B cell (primary cell): ENCODE measurements at regions of chr3 and their contacts with region 1.

Region 1: DNA sequence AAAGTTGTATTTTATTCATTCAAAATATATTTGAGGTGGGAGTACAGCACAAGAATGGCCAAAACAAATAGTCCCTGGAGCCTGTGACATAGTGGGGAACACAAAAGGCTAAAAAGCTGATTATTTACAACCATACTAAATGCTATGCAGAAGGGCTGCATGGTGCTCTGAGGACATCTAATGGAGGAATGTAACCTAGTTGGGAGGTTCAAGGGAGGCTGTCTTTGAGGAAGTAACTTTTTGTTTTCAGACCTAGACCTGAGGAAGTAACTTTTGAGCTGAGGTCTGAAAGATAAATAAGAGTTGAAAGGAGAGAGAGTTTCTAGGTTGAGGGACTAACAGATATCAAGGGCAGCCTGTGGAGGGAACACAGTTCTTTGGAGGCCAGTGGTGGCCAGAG is 34.8 kb upstream of the RASA2 start:
- DNase-seq: peak; percentile 79
- ATAC-seq: peak; percentile 85
- H3K4me3 ChIP-seq: no peak overlapping the region
- H3K4me3 Mint-ChIP-seq: no peak overlapping the region
- H3K27ac ChIP-seq: peak overlapping the region; percentile 55 to 77
- H3K27ac Mint-ChIP-seq: no peak overlapping the region
- H3K4me1 ChIP-seq: peaks cover 12 to 16% of the 10 kb centered on the region in 2 donors
- H3K4me1 Mint-ChIP-seq: peaks cover 7% of the 10 kb centered on the region
- H3K27me3 ChIP-seq: no peaks in the 10 kb centered on the region
- H3K27me3 Mint-ChIP-seq: no peaks in the 10 kb centered on the region
- CTCF ChIP-seq: peak; percentile 73

Region 2: DNA sequence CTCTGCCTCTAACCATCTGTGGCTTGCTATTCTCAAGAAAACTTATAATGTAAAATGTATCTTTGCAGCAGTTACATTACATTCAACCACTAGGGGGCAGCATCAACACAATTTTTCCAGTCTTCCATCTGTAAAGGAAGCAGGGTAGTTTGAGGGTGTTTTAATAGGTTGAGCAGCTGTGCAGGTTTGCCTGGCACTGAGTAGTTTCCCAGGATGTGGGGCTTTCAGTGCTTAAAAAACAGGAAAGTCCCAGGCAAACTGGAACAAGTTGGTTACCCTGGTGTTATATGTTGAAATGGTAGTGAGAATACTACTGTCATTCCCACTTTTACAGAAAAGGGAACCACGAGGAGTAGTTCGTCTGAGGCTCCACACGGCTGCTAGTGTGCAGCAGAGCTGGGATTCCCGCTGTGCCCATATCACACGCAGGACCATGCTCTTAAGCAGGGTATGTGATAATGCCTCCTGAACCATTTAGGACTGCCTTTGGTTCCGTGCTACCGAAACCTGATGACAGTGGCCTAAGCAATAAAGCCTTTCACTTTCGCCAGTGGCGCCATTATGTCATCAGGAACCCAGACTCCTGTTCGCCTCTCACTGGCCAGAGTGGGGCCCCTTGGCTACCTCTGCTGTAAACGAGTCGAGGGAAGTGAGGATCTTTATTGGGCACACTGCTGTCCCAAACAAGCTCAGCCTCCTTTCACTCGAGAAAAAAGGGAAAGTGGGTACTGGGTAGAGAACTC is 148.4 kb before region 1 on chr3:
- CTCF ChIA-PET with region 1: interaction called, 404 read pairs
- POLR2A ChIA-PET with region 1: no interaction called
- intact Hi-C with region 1: loop called (anchors 1 kb)
- DNase-seq: peak; percentile 83
- ATAC-seq: peak; percentile 78
- H3K4me3 ChIP-seq: no peak overlapping the region
- H3K4me3 Mint-ChIP-seq: no peak overlapping the region
- H3K27ac ChIP-seq: no peak overlapping the region
- H3K27ac Mint-ChIP-seq: no peak overlapping the region
- H3K4me1 ChIP-seq: peaks cover 0 to 5% of the 10 kb centered on the region in 2 donors
- H3K4me1 Mint-ChIP-seq: no peaks in the 10 kb centered on the region
- H3K27me3 ChIP-seq: no peaks in the 10 kb centered on the region
- H3K27me3 Mint-ChIP-seq: no peaks in the 10 kb centered on the region
- CTCF ChIP-seq: peak; percentile 84

Region 3: DNA sequence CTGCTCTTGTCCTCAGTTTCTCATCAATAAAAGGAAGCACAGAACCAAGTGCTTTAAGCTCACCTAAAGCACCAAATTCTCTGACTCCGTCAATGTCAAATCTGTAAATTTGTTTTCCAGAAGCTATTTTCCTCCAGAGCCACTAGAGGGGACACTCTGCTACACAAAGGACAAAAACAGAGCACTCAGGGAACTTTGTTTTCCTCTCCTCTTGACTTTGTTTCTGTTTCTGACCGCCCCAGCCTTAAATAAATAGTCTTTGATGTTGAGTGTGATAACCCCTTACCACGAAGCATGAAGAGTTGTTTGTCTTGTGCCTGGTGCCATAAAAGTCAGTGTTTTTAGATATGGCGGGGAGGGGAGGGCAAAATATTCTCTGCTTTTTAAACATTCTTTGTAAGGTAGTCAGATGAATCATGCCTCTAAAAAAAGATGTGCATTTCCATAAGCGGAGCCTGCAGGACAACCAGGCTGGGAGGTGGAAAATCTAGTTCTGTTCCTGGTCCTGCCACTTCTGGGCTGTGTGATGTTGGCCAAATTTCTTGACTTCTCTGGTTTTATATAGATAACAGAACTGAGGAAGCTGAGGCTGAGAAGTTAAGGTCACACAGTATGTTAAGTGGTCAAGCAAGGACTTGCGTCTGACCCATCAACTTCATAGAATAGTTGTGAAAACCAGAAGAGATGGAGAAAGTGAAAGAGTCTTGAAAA is 91.0 kb before region 1 on chr3:
- CTCF ChIA-PET with region 1: interaction called, 104 read pairs
- POLR2A ChIA-PET with region 1: no interaction called
- intact Hi-C with region 1: loop called (anchors 1 kb)
- DNase-seq: peak; percentile 54
- ATAC-seq: peak; percentile 65
- H3K4me3 ChIP-seq: no peak overlapping the region
- H3K4me3 Mint-ChIP-seq: peak overlapping the region; percentile 3
- H3K27ac ChIP-seq: no peak overlapping the region
- H3K27ac Mint-ChIP-seq: no peak overlapping the region
- H3K4me1 ChIP-seq: no peaks in the 10 kb centered on the region
- H3K4me1 Mint-ChIP-seq: no peaks in the 10 kb centered on the region
- H3K27me3 ChIP-seq: no peaks in the 10 kb centered on the region
- H3K27me3 Mint-ChIP-seq: no peaks in the 10 kb centered on the region
- CTCF ChIP-seq: peak; percentile 58

Region 4: DNA sequence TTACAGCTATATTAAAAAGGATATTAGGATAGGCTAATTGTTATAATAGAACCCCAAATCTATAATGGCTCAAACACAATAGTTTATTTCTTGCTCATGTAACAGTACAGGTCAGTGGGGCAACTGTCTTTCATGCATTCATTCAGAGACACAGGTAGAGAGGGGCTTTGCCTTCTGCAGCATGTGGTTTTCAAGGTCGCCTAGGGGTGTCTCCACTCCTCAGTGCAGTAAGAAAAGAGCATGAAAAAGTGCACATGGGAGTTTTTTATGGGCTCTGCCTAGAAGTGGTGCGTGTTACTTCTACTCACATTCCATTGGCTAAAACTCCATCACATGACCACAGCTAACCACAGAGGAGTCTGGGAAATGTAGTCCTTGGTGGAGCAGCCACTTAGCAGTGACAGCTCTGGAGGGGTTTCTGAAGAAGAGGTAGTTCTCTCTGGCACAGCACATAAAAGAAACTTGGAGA is 81.9 kb before region 1 on chr3:
- CTCF ChIA-PET with region 1: interaction called, 48 read pairs
- POLR2A ChIA-PET with region 1: no interaction called
- intact Hi-C with region 1: loop called (anchors 1 kb)
- DNase-seq: peak; percentile 91
- ATAC-seq: peak; percentile 98
- H3K4me3 ChIP-seq: no peak overlapping the region
- H3K4me3 Mint-ChIP-seq: peak overlapping the region; percentile 5
- H3K27ac ChIP-seq: peak overlapping the region in 1 of 2 donors; percentile 42
- H3K27ac Mint-ChIP-seq: peak overlapping the region; percentile 62
- H3K4me1 ChIP-seq: peaks cover 4 to 8% of the 10 kb centered on the region in 2 donors
- H3K4me1 Mint-ChIP-seq: peaks cover 20% of the 10 kb centered on the region
- H3K27me3 ChIP-seq: no peaks in the 10 kb centered on the region
- H3K27me3 Mint-ChIP-seq: no peaks in the 10 kb centered on the region
- CTCF ChIP-seq: peak; percentile 69

Region 5: DNA sequence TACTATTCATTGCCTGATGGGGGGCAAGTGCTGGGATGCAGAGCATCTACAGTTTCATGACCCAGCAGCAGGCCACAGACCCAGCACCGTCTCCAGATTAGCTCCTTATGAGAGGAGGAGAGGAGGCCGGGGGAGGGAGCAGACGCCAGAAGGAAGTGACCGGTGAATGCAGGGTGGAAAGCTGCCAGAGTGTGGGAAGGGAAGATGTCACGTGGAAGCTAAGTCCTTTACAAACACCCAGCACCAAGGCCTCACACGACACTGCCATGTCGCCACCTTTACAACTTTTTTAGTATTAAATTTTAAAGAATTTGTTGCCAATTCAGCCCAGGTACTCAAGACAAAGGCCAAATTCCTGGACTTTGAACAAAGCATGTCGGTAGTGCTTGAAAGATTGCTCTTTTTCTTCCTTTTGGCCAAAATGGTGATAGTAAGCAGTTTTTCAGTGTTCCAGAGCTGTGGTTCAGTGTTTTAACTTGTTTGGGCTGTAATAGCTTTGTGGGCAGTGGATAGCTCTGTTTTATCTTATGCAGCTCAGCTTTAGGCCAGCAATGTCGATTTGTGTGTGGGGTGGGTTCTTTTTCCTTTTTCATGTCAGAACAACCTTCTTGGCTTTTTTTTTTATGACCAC is 25.5 kb before region 1 on chr3:
- CTCF ChIA-PET with region 1: interaction called, 20 read pairs
- POLR2A ChIA-PET with region 1: no interaction called
- intact Hi-C with region 1: no loop called
- DNase-seq: no peak
- ATAC-seq: no peak
- H3K4me3 ChIP-seq: no peak overlapping the region
- H3K4me3 Mint-ChIP-seq: no peak overlapping the region
- H3K27ac ChIP-seq: no peak overlapping the region
- H3K27ac Mint-ChIP-seq: no peak overlapping the region
- H3K4me1 ChIP-seq: no peaks in the 10 kb centered on the region
- H3K4me1 Mint-ChIP-seq: peaks cover 3% of the 10 kb centered on the region
- H3K27me3 ChIP-seq: no peaks in the 10 kb centered on the region
- H3K27me3 Mint-ChIP-seq: no peaks in the 10 kb centered on the region
- CTCF ChIP-seq: no peak